ENCODE measurements at regions of chr20 and their contacts with region 1.

Region 1: GRCh38 chr20:60274717-60275116 is 316.5 kb downstream of the CDH26 start:
- DNase-seq: no peak
- H3K4me3 ChIP-seq: no peak overlapping the region
- CTCF ChIP-seq: no peak

Region 2: GRCh38 chr20:60224914-60225313 is 49.8 kb before region 1 on chr20:
- in situ Hi-C with region 1: loop called (anchors 5 kb)
- DNase-seq: no peak
- H3K4me3 ChIP-seq: no peak overlapping the region
- CTCF ChIP-seq: peak; percentile 43

Region 3: GRCh38 chr20:60334931-60335330 is 60.2 kb after region 1 on chr20:
- in situ Hi-C with region 1: loop called (anchors 5 kb)
- DNase-seq: no peak
- H3K4me3 ChIP-seq: no peak overlapping the region
- CTCF ChIP-seq: no peak

Measured in astrocyte of the cerebellum (primary cell).